ENCODE measurements at regions of chr5 and their contacts with region 1.

Region 1: DNA sequence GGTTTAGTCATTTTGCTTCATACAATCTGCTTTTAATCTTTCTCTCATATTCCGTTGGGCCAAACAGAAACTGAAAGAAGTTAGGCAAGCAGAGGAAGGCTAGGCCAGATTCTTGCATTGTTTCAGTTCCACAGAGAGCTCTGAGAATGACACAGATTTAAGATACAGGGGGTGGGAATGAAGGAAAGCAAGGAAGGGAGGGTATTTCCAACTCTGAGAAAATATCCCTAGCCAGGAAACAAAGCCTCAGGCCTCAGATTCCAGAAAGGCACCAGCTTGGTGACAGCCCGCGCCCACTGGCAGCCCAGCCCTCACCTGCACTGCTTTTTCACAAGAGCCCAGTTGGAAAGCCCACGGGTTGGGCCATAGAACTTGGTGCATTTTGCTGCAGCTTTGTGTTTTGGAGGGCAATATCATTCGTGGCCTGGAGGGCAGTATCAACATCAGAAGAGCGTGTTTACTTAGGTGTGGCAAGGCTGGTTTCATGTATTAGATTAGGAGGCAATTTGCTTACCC is 63.5 kb downstream of the ENC1 start:
- DNase-seq: peak in 2 of 5 donors; percentile 17 to 26
- ATAC-seq: peak in 3 of 4 donors; percentile 66 to 94 (median 83)
- H3K4me3 ChIP-seq: peak overlapping the region in 7 of 12 donors; percentile 1 to 40 (median 29)
- H3K27ac ChIP-seq: peak overlapping the region; percentile 36 to 87 (median 70)
- H3K4me1 ChIP-seq: peaks cover 0 to 39% (median 16%) of the 10 kb centered on the region in 12 donors
- H3K27me3 ChIP-seq: no peaks in the 10 kb centered on the region
- CTCF ChIP-seq: no peak
- POLR2A ChIP-seq: no peak

Region 2: GRCh38 chr5:73812962-73813588 is 763.9 kb before region 1 on chr5:
- intact Hi-C with region 1: no loop called
- DNase-seq: no peak
- ATAC-seq: no peak
- H3K4me3 ChIP-seq: no peak overlapping the region
- H3K27ac ChIP-seq: no peak overlapping the region
- H3K4me1 ChIP-seq: no peaks in the 10 kb centered on the region
- H3K27me3 ChIP-seq: peaks cover 0 to 4% (median 0%) of the 10 kb centered on the region in 9 donors
- CTCF ChIP-seq: no peak
- POLR2A ChIP-seq: no peak

Region 3: GRCh38 chr5:74294231-74294705 is 282.7 kb before region 1 on chr5:
- intact Hi-C with region 1: no loop called
- DNase-seq: peak in 1 of 5 donors; percentile 62
- ATAC-seq: no peak
- H3K4me3 ChIP-seq: no peak overlapping the region
- H3K27ac ChIP-seq: no peak overlapping the region
- H3K4me1 ChIP-seq: peaks cover 0 to 23% (median 2%) of the 10 kb centered on the region in 12 donors
- H3K27me3 ChIP-seq: no peaks in the 10 kb centered on the region
- CTCF ChIP-seq: no peak
- POLR2A ChIP-seq: no peak

Region 4: DNA sequence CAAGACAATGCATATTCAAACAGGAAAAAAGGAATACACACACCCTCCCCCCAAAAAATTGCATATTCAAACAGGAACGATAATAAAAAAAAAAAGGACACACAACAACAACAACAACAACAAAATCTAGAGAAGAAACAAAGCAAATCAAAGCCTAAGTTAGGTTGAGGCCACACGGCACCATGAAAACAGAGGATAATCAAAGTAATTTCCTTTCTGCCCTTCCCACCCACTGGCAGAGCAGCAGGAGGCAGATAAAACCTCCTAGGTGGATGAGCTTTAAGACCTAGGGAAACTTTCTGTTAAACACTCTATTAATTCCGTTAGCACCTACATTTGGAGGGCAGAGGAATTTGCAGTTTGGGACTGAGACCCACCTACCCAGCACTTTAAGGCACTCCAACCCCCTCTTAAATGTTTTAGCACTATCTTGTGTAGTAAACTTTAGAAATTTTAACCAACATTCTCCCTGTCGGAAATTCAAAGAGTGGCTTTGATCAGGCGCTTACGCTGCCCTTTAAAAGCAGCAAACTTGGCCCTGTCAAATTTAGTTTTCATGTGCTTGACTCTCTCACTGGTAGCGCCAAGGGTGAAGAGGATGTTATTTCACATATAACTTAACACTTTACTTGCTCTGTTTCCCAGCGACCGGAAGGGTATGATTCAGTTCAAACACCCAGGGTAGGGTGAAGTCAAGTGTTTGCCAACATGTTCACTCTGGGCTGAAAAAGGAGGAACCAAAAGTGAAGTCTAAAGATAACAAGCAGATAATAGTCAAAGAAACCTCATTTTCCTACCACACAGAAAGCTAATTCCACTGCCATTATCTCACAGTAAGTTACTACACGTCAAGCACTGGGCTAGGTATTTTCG is 54.3 kb after region 1 on chr5:
- intact Hi-C with region 1: loop called in 1 of 10 experiments (anchors 5 kb)
- DNase-seq: no peak
- ATAC-seq: peak in 3 of 4 donors; percentile 48 to 72 (median 69)
- H3K4me3 ChIP-seq: no peak overlapping the region
- H3K27ac ChIP-seq: peak overlapping the region in 2 of 12 donors; percentile 8 to 82
- H3K4me1 ChIP-seq: peaks cover 0 to 51% (median 20%) of the 10 kb centered on the region in 12 donors
- H3K27me3 ChIP-seq: no peaks in the 10 kb centered on the region
- CTCF ChIP-seq: no peak
- POLR2A ChIP-seq: no peak

Measured in heart left ventricle (tissue), 16 donors.